K562 (cell line): ENCODE measurements at regions of chr6 and their contacts with region 1.

Region 1: DNA sequence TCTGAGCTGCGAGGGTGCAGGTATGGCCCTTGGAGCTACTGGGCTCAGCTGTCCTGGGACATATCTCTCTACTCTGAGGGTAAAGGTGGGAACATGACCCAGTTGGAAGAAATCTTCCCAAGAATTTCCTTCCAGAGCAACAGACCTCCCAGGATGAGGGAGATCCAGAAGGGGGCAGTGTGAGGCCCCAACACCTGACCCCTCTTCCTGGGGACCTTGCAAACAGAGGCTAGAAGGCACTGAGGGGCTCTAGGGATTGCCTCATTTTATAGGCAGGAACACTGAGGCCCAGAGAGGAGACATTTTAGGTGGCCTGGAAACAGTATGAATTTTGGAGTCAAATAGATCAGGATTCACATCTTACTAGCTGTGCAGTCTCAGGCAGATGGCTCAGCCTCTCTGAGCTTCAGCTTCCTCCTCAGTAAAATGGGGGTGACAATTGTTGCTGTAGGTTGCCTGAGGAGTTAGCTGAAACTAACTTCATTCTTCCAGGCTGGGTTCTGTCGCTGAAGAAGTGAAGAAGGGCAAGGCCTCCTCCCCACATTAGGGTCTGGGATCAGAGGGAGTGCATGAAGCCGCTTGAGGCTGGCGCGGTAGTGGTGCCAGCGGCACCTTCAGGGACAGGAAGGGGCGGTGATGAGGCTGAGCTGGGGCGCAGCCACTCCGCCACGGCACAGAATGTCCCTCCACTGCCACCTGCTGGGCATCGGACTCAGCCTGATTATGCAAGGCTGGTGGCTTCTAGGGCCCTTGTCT is 11.4 kb downstream of the KCNK17 start:
- DNase-seq: peak; percentile 89 to 94 (median 92)
- ATAC-seq: peak; percentile 95
- H3K4me3 ChIP-seq: no peak overlapping the region
- H3K27ac ChIP-seq: no peak overlapping the region
- H3K4me1 ChIP-seq: peaks cover 0 to 13% of the 10 kb centered on the region in 2 experiments; a peak in 3 of 5 replicates
- H3K27me3 ChIP-seq: peaks cover 27 to 66% of the 10 kb centered on the region in 2 experiments
- CTCF ChIP-seq: peak; percentile 97 to 98 (median 98)
- EP300 ChIP-seq: no peak
- POLR2A ChIP-seq: no peak
- RAD21 ChIP-seq: peak; percentile 99 to 100

Region 2: GRCh38 chr6:38973178-38974054 is 329.4 kb before region 1 on chr6:
- CTCF ChIA-PET with region 1: interaction called, 3 read pairs
- POLR2A ChIA-PET with region 1: no interaction called
- in situ Hi-C with region 1: no loop called
- intact Hi-C with region 1: loop called (anchors 1 kb)
- DNase-seq: peak; percentile 58 to 78 (median 65)
- ATAC-seq: peak; percentile 97
- H3K4me3 ChIP-seq: no peak overlapping the region
- H3K27ac ChIP-seq: no peak overlapping the region
- H3K4me1 ChIP-seq: peaks cover 0 to 4% of the 10 kb centered on the region in 2 experiments; a peak in 2 of 5 replicates
- H3K27me3 ChIP-seq: peaks cover 0 to 6% of the 10 kb centered on the region in 2 experiments; a peak in 2 of 5 replicates
- CTCF ChIP-seq: peak; percentile 81 to 99 (median 97)
- EP300 ChIP-seq: no peak
- POLR2A ChIP-seq: no peak
- RAD21 ChIP-seq: peak; percentile 77 to 88

Region 3: GRCh38 chr6:39088331-39088730 is 214.5 kb before region 1 on chr6:
- CTCF ChIA-PET with region 1: interaction called, 3 read pairs
- POLR2A ChIA-PET with region 1: no interaction called
- in situ Hi-C with region 1: no loop called
- intact Hi-C with region 1: loop called (anchors 5 kb)
- DNase-seq: peak; percentile 33 to 55 (median 47)
- ATAC-seq: peak; percentile 92
- H3K4me3 ChIP-seq: no peak overlapping the region
- H3K27ac ChIP-seq: no peak overlapping the region
- H3K4me1 ChIP-seq: no peaks in the 10 kb centered on the region; a peak in 1 of 5 replicates
- H3K27me3 ChIP-seq: peaks cover 39 to 77% of the 10 kb centered on the region in 2 experiments
- CTCF ChIP-seq: peak; percentile 38 to 67 (median 52); a peak in 5 of 6 replicates
- EP300 ChIP-seq: no peak
- POLR2A ChIP-seq: no peak
- RAD21 ChIP-seq: peak; percentile 34 to 59; a peak in 3 of 4 replicates

Region 4: GRCh38 chr6:39166189-39166911 is 136.5 kb before region 1 on chr6:
- CTCF ChIA-PET with region 1: interaction called, 84 read pairs
- POLR2A ChIA-PET with region 1: interaction called, 6 read pairs
- in situ Hi-C with region 1: loop called (anchors 5 kb)
- intact Hi-C with region 1: loop called (anchors 1 kb)
- DNase-seq: peak; percentile 89 to 95 (median 92)
- ATAC-seq: peak; percentile 99
- H3K4me3 ChIP-seq: no peak overlapping the region
- H3K27ac ChIP-seq: no peak overlapping the region
- H3K4me1 ChIP-seq: no peaks in the 10 kb centered on the region
- H3K27me3 ChIP-seq: no peaks in the 10 kb centered on the region; a peak in 2 of 5 replicates
- CTCF ChIP-seq: peak; percentile 97
- EP300 ChIP-seq: no peak
- POLR2A ChIP-seq: no peak
- RAD21 ChIP-seq: peak; percentile 98 to 100